ENCODE measurements at regions of chr19 and their contacts with region 1.

Region 1: DNA sequence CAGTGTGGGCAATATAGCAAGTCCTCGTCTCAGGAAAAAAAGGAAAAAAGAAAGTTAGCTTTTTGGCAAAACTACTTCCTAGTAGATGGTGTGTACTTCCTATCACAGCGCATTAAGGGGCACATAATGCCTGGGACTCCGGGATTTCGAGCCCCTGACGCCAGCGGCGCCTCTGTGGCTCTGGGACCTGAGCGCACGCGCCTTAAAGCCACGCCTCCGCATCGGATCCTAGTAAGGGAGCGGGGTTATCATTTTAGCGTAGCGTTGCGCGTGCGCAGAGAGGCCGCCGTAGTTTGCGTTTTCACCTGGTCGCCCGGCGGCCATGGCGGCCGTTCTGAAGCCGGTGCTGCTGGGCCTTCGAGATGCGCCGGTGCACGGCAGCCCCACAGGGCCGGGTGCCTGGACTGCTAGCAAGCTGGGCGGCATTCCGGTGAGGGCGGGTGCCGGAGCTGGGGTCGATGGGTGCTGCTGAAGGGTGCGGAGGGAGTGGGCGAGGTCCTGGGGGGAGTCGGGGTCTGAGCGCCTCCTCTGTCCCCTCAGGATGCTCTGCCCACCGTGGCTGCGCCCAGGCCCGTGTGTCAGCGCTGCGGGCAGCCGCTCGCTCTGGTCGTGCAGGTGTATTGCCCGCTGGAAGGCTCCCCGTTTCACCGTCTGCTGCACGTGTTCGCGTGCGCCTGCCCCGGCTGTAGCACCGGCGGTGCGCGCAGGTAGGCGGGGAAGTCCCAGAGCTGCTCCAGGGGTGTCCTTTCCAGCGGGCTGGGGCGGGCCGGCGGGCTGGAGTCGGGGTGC is at the start of gene PDCD2L:
- DNase-seq: peak; percentile 81 to 91 (median 86)
- H3K4me3 ChIP-seq: peak within 1 kb of the TSS; percentile 66 to 99 (median 95)
- H3K27ac ChIP-seq: peak within 1 kb of the TSS in 50 of 59 donors; percentile 3 to 88 (median 63)
- H3K27me3 ChIP-seq: no peaks in the 10 kb centered on the region
- CTCF ChIP-seq: peak in 20 of 56 donors; percentile 3 to 46 (median 24)
- total RNA-seq, gene PDCD2L: 5.0 to 24.8 (median 12.6) TPM

Region 2: DNA sequence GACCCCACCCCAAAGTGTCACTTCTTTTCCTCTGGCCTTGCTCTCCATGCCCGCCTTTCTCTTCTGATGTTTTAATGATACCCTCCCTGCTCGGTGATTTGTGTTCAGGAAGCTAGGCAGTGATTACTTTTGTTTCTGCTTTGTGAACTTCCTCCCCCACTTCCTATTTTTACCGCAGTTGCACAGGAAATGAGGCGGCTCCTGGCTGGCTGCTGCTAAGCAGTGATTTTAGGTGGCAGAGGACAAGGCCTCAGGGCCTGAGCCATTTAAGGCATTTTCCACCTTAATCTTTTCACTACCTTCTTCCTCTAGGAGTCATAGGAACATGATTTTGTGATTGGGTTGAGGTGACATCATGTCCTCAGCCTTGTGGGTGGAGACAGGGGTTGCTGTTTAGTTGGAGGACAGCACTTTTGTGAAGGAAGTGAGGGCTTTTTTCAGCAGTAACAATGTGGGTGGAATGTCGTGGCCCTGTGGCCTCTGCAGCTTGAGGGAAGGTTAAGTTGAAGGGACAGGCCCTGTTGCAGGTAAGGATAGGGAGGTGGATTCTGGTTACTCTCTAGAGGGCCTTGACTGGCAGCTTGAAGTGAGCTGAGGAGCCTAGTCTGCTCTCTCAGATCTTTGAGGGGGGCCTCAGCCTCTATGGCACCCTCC is 134.2 kb before region 1 on chr19:
- intact Hi-C with region 1: no loop called
- DNase-seq: peak in 2 of 10 donors; percentile 16 to 26
- H3K4me3 ChIP-seq: peak overlapping the region in 6 of 59 donors; percentile 1 to 12 (median 6)
- H3K27ac ChIP-seq: peak overlapping the region in 57 of 59 donors; percentile 32 to 88 (median 75)
- H3K27me3 ChIP-seq: no peaks in the 10 kb centered on the region
- CTCF ChIP-seq: no peak

Region 3: GRCh38 chr19:34364830-34365462 is 39.4 kb before region 1 on chr19 and contains the start of gene GPI:
- intact Hi-C with region 1: loop called in 1 of 2 experiments (anchors 2 kb)
- DNase-seq: peak; percentile 35 to 80 (median 56)
- H3K4me3 ChIP-seq: peak within 1 kb of the TSS; percentile 65 to 99 (median 94)
- H3K27ac ChIP-seq: peak within 1 kb of the TSS in 57 of 59 donors; percentile 39 to 94 (median 83)
- H3K27me3 ChIP-seq: no peaks in the 10 kb centered on the region
- CTCF ChIP-seq: peak in 2 of 56 donors; percentile 8 to 18
- total RNA-seq, gene GPI: 264 to 683 (median 537) TPM

Region 4: DNA sequence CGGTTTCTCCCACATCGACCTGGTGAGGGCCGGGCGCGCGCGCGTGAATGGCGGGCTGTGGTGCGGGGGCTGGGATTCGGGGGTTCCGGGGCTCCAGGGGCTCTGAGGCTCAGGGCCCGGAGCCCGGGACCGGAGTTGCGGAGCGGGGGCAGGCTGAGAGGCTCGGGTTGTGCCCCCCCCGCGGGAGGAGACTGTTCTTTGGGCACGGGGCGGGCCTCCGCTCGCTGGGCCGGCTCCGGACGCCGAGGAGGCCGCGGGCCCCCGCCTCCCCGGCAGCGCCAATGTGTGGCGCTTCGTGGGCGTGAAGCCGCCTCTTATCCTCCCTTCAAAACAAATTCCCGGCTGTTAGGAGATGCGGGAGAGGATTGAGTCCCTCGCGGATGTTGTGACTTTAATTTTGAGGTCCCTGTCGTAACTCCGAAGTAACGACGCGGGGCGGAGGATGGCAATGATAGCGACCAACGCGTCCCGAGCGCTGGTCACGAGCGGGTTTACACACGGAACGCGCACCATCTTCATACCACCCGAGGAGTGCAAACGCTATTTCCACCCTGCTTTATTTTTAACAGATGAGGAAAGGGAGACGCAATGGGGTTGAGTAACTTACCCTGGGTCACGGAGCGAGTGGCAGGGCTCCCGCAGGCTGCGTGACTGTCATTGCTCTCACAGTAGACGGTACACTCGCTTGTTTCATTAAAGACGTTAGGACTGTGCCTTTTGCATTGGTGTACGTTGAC is 24.4 kb after region 1 on chr19:
- intact Hi-C with region 1: loop called in 1 of 2 experiments (anchors 1 kb)
- DNase-seq: peak in 4 of 10 donors; percentile 24 to 53 (median 38)
- H3K4me3 ChIP-seq: peak overlapping the region; percentile 74 to 98 (median 92)
- H3K27ac ChIP-seq: peak overlapping the region in 58 of 59 donors; percentile 2 to 94 (median 87)
- H3K27me3 ChIP-seq: no peaks in the 10 kb centered on the region
- CTCF ChIP-seq: peak in 4 of 56 donors; percentile 3 to 15 (median 7)

Region 5: DNA sequence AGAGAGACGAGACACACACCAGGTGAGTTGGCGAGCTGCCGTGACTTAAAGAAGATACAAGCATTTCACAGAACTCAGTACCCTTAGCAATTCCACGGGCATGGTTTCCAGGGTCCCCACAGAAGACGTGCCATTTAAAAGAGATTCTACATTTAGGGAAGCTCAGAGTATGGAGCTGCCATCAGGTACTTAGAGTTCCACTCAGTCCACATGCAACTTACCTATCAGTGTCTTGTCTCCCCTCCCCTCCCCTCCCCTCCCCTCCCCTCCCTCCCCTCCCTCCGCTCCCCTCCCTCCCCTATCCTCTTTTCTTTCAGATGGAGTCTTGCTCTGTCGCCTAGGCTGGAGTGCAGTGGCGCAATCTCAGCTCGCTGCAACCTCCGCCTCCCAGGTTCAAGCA is 534.6 kb after region 1 on chr19:
- intact Hi-C with region 1: loop called in 1 of 2 experiments (anchors 10 kb)
- DNase-seq: no peak
- H3K4me3 ChIP-seq: no peak overlapping the region
- H3K27ac ChIP-seq: no peak overlapping the region
- H3K27me3 ChIP-seq: no peaks in the 10 kb centered on the region
- CTCF ChIP-seq: no peak

Measured in dorsolateral prefrontal cortex (tissue), 120 donors.